ENCODE measurements at regions of chr11 and their contacts with region 1.

Region 1: DNA sequence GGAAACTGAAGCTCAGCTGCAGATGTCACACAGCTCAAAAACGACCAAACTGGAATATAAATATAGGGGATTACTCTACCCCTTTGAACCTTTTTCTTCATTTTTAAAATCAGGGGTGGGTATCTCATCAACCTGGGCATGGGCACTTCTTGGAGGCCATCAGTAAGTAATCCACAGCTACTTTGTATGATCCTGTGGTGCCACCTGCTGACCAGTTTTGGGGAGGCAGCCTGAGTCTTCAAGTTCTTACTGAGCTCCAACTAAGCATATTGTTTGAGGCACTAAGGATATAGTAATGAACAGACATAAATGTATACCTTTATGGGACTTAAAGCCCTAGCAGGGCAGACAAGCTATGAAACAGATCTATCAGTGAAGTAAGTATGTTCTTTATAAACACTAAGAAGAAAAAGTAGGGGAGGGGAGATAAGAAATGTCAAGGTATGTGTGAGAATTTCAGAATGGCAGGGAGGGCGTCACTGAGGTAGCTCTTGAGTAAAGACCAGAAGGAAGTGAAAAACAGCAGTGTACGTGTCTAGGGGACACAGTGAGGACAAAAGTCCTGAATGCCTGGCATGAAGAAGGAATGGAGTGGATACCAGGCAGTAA is 18.4 kb downstream of the TUB start:
- DNase-seq: peak; percentile 56 to 68 (median 58)
- H3K4me3 ChIP-seq: no peak overlapping the region
- H3K4me3 Mint-ChIP-seq: no peak overlapping the region
- H3K27ac ChIP-seq: no peak overlapping the region
- H3K27ac Mint-ChIP-seq: peak overlapping the region in 1 of 7 donors; percentile 1
- H3K4me1 ChIP-seq: no peaks in the 10 kb centered on the region
- H3K4me1 Mint-ChIP-seq: no peaks in the 10 kb centered on the region
- H3K27me3 ChIP-seq: no peaks in the 10 kb centered on the region
- H3K27me3 Mint-ChIP-seq: no peaks in the 10 kb centered on the region

Region 2: GRCh38 chr11:7892840-7893254 is 206.5 kb before region 1 on chr11:
- CTCF ChIA-PET with region 1: interaction called, 23 read pairs
- POLR2A ChIA-PET with region 1: no interaction called
- intact Hi-C with region 1: loop called (anchors 1 kb)
- DNase-seq: peak in 4 of 5 donors; percentile 37 to 49 (median 40)
- H3K4me3 ChIP-seq: no peak overlapping the region
- H3K4me3 Mint-ChIP-seq: no peak overlapping the region
- H3K27ac ChIP-seq: no peak overlapping the region
- H3K27ac Mint-ChIP-seq: no peak overlapping the region
- H3K4me1 ChIP-seq: peaks cover 3% of the 10 kb centered on the region
- H3K4me1 Mint-ChIP-seq: peaks cover 0 to 5% (median 3%) of the 10 kb centered on the region in 4 donors
- H3K27me3 ChIP-seq: no peaks in the 10 kb centered on the region
- H3K27me3 Mint-ChIP-seq: peaks cover 2 to 3% of the 10 kb centered on the region in 2 donors

Region 3: GRCh38 chr11:8056810-8057463 is 42.5 kb before region 1 on chr11:
- CTCF ChIA-PET with region 1: interaction called, 13 read pairs
- POLR2A ChIA-PET with region 1: no interaction called
- intact Hi-C with region 1: no loop called
- DNase-seq: no peak
- H3K4me3 ChIP-seq: no peak overlapping the region
- H3K4me3 Mint-ChIP-seq: no peak overlapping the region
- H3K27ac ChIP-seq: no peak overlapping the region
- H3K27ac Mint-ChIP-seq: no peak overlapping the region
- H3K4me1 ChIP-seq: no peaks in the 10 kb centered on the region
- H3K4me1 Mint-ChIP-seq: peaks cover 0 to 2% (median 0%) of the 10 kb centered on the region in 4 donors
- H3K27me3 ChIP-seq: no peaks in the 10 kb centered on the region
- H3K27me3 Mint-ChIP-seq: no peaks in the 10 kb centered on the region

Region 4: GRCh38 chr11:8080674-8081590 is 18.5 kb before region 1 on chr11 and contains the start of gene TUB:
- CTCF ChIA-PET with region 1: interaction called, 73 read pairs
- POLR2A ChIA-PET with region 1: no interaction called
- intact Hi-C with region 1: no loop called
- DNase-seq: peak in 2 of 5 donors; percentile 4 to 22
- H3K4me3 ChIP-seq: no peak within 1 kb of the TSS
- H3K4me3 Mint-ChIP-seq: peak within 1 kb of the TSS; percentile 63 to 84 (median 72)
- H3K27ac ChIP-seq: no peak within 1 kb of the TSS
- H3K27ac Mint-ChIP-seq: no peak within 1 kb of the TSS
- H3K4me1 ChIP-seq: peaks cover 7% of the 10 kb centered on the region
- H3K4me1 Mint-ChIP-seq: peaks cover 2 to 11% (median 7%) of the 10 kb centered on the region in 4 donors
- H3K27me3 ChIP-seq: peaks cover 22% of the 10 kb centered on the region
- H3K27me3 Mint-ChIP-seq: peaks cover 33 to 46% of the 10 kb centered on the region in 2 donors
- total RNA-seq, gene TUB: 0.26 to 0.36 TPM

Region 5: DNA sequence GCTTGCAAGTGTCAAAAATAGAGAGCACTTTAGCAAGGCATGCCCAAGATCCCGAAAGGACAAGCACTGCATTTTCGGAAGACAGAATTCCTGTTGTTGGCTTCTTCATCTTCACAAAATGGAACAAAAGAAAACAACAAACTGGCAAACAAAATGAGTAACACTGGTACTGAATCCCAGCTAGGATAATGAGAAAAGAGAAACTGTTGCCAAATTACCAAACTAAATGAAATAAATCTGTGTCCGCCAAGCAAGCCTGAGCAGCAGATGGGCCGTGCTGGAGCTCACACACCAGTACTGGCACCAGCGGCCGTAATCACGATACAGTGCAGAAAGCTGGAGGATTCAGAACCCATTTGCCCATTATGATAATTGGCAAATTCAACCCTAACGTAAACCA is 12.2 kb after region 1 on chr11:
- CTCF ChIA-PET with region 1: interaction called, 66 read pairs
- POLR2A ChIA-PET with region 1: no interaction called
- intact Hi-C with region 1: no loop called
- DNase-seq: no peak
- H3K4me3 ChIP-seq: no peak overlapping the region
- H3K4me3 Mint-ChIP-seq: no peak overlapping the region
- H3K27ac ChIP-seq: no peak overlapping the region
- H3K27ac Mint-ChIP-seq: no peak overlapping the region
- H3K4me1 ChIP-seq: no peaks in the 10 kb centered on the region
- H3K4me1 Mint-ChIP-seq: no peaks in the 10 kb centered on the region
- H3K27me3 ChIP-seq: no peaks in the 10 kb centered on the region
- H3K27me3 Mint-ChIP-seq: no peaks in the 10 kb centered on the region

Region 6: GRCh38 chr11:8168485-8169257 is 69.3 kb after region 1 on chr11 and contains the start of gene RIC3:
- CTCF ChIA-PET with region 1: interaction called, 11 read pairs
- POLR2A ChIA-PET with region 1: no interaction called
- intact Hi-C with region 1: no loop called
- DNase-seq: peak; percentile 38 to 56 (median 49)
- H3K4me3 ChIP-seq: peak within 1 kb of the TSS; percentile 68 to 79
- H3K4me3 Mint-ChIP-seq: peak within 1 kb of the TSS; percentile 81 to 95 (median 88)
- H3K27ac ChIP-seq: no peak within 1 kb of the TSS
- H3K27ac Mint-ChIP-seq: peak within 1 kb of the TSS in 6 of 7 donors; percentile 49 to 92 (median 70)
- H3K4me1 ChIP-seq: peaks cover 17% of the 10 kb centered on the region
- H3K4me1 Mint-ChIP-seq: peaks cover 20 to 39% (median 23%) of the 10 kb centered on the region in 4 donors
- H3K27me3 ChIP-seq: no peaks in the 10 kb centered on the region
- H3K27me3 Mint-ChIP-seq: peaks cover 20 to 33% of the 10 kb centered on the region in 2 donors
- total RNA-seq, gene RIC3: 28.7 to 30.0 TPM

Region 7: DNA sequence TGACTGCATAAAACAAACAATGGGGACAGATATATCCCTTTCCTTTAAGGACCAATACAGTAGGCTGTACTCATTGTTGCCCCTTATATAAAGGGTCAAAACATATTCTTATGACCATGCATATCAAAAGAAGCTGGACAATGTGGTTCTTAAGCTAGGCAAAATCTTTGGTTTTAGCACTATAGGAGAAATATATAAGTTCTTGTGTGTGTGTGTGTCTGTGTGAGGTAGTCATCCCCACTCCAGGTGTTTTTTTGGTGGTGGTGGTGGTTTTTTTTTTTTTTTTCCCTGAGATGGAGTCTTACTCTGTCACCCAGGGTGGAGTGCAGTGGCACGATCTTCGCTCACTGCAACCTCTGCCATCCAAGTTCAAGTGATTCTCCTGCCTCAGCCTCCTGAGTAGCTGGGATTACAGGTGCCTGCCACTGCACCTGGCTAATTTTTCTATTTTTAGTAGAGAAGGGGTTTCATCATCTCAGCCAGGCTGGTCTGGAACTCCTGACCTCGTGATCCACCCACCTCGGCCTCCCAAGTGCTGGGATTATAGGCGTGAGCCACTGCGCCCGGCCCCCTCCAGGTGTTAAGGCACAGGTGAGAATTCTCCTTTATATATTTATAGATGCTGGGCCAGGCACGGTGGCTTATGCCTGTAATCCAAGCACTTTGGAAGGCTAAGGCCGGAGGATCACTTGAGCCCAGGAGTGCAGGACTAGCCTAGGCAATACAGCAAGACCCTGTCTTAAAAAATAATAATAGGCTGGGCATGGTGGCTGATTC is 1349.4 kb after region 1 on chr11:
- CTCF ChIA-PET with region 1: no interaction called
- POLR2A ChIA-PET with region 1: no interaction called
- intact Hi-C with region 1: no loop called
- DNase-seq: no peak
- H3K4me3 ChIP-seq: no peak overlapping the region
- H3K4me3 Mint-ChIP-seq: no peak overlapping the region
- H3K27ac ChIP-seq: no peak overlapping the region
- H3K27ac Mint-ChIP-seq: no peak overlapping the region
- H3K4me1 ChIP-seq: peaks cover 4% of the 10 kb centered on the region
- H3K4me1 Mint-ChIP-seq: peaks cover 3 to 10% (median 6%) of the 10 kb centered on the region in 4 donors
- H3K27me3 ChIP-seq: no peaks in the 10 kb centered on the region
- H3K27me3 Mint-ChIP-seq: no peaks in the 10 kb centered on the region

Measured in CD4-positive, alpha-beta memory T cell (primary cell).